A549 (cell line): ENCODE measurements at regions of chr9 and their contacts with region 1.

Region 1: DNA sequence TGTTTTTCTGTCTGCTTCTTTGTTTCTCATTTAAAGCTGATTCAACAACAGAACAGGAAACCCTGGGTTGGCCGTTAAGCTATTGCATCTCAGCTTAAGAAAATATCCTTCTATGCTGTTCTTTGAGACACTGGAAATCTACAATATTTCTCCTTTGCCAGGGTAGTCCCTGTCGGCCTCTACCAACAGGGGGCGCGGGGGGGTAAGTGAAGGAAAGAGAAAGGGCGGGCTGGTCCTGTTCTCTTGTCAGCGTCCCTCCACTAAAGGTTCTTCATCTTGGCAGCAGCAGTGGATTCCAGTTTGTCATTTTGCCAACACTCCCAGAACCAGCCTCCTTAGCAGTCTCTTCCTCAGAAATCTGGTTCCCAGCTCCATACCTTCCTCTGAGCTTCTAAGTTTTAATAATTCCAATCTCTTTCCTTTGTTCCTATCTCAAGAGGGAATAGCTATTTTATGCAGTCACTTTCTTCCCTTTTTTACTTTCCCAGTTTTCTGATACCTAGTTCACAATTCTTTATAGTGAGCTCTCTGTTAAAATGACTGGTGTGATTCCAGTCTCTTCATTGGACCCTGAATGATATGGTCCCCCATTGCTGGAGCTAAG is 222.3 kb downstream of the GLIS3 start:
- DNase-seq: peak; percentile 56 to 76
- ATAC-seq: peak; percentile 87 to 93
- H3K4me3 ChIP-seq: no peak overlapping the region
- H3K27ac ChIP-seq: peak overlapping the region; percentile 19 to 47
- H3K4me1 ChIP-seq: peaks cover 33% of the 10 kb centered on the region
- CTCF ChIP-seq: peak; percentile 63
- EP300 ChIP-seq: no peak
- POLR2A ChIP-seq: no peak
- RAD21 ChIP-seq: peak; percentile 78 to 83

Region 2: DNA sequence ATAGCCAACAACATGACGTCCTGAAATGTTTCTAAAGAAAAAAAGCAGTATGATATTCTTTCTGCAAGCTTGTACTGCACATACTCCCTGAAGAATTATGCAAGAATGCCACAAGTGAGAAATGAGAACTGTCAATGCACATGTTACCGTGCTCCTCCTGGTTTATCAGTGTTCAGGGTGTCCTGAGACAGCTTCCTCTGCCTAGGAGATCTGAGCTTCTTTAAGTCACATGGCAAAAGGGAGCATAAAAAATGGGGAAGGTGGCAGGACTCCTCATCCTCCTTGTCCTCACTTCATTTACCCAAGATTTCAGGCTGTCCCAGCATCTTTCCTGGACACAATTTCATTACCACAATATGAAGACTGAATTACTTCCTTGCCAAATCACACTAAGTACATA is 15.9 kb before region 1 on chr9:
- CTCF ChIA-PET with region 1: interaction called, 11 read pairs
- POLR2A ChIA-PET with region 1: no interaction called
- DNase-seq: no peak
- ATAC-seq: no peak
- H3K4me3 ChIP-seq: no peak overlapping the region
- H3K27ac ChIP-seq: no peak overlapping the region
- H3K4me1 ChIP-seq: peaks cover 22% of the 10 kb centered on the region
- CTCF ChIP-seq: no peak
- EP300 ChIP-seq: no peak
- POLR2A ChIP-seq: no peak
- RAD21 ChIP-seq: no peak

Region 3: DNA sequence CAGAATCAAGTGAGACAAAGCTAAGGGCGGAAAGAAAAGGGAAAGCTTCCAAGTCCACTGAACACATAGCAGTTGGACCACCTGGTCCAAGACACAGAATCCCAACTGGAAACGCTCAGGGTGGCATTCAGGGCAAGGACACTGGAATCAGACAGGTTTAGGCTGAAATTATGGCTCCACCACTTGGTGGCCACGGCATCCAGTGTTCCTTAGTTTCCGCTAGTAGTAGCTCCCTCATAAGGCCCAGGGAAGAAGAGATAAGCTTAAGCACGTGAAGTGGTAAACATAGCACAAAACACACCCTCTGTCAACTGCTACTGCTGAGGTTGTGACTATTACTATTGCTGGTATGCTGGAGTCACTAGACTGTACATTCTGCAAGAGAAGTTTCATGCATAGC is 12.9 kb after region 1 on chr9:
- CTCF ChIA-PET with region 1: interaction called, 11 read pairs
- POLR2A ChIA-PET with region 1: no interaction called
- DNase-seq: peak in 1 of 2 experiments; percentile 31
- ATAC-seq: peak in 1 of 2 experiments; percentile 73; a peak in 3 of 6 replicates
- H3K4me3 ChIP-seq: no peak overlapping the region
- H3K27ac ChIP-seq: no peak overlapping the region
- H3K4me1 ChIP-seq: peaks cover 35% of the 10 kb centered on the region
- CTCF ChIP-seq: no peak
- EP300 ChIP-seq: no peak
- POLR2A ChIP-seq: no peak
- RAD21 ChIP-seq: peak in 1 of 2 experiments; percentile 19; a peak in 1 of 5 replicates

Region 4: GRCh38 chr9:4126180-4126865 is 48.7 kb after region 1 on chr9:
- CTCF ChIA-PET with region 1: interaction called, 11 read pairs
- POLR2A ChIA-PET with region 1: no interaction called
- DNase-seq: peak; percentile 46 to 50
- ATAC-seq: peak; percentile 52 to 76; a peak in 4 of 6 replicates
- H3K4me3 ChIP-seq: no peak overlapping the region
- H3K27ac ChIP-seq: peak overlapping the region; percentile 64 to 76
- H3K4me1 ChIP-seq: peaks cover 58% of the 10 kb centered on the region
- CTCF ChIP-seq: no peak
- EP300 ChIP-seq: no peak
- POLR2A ChIP-seq: no peak
- RAD21 ChIP-seq: no peak

Region 5: DNA sequence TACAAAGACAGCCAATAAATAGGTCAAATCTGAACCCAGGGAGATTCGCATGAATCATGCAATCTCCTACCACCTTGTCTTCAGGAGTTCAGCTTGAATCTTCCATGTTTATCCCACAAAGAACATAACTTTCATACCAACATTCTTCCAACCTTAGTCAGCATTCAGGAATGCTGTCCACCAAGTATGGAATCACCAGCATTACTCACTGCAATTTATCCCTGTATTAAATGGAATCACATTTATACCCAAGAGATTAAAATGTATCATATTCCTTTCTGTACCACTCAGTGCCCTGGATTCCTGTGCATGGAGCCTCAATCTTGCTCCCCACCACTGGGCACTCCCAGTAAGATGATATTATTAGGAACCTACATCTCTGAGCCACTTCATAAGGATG is 59.6 kb after region 1 on chr9:
- CTCF ChIA-PET with region 1: interaction called, 14 read pairs
- POLR2A ChIA-PET with region 1: no interaction called
- DNase-seq: peak; percentile 65 to 91
- ATAC-seq: peak; percentile 87 to 91
- H3K4me3 ChIP-seq: 0 out of 3 replicates have a peak overlapping the region, but pooled peaks have one; percentile 15
- H3K27ac ChIP-seq: peak overlapping the region; percentile 85 to 91
- H3K4me1 ChIP-seq: peaks cover 70% of the 10 kb centered on the region
- CTCF ChIP-seq: no peak
- EP300 ChIP-seq: peak; percentile 70 to 77; a peak in 2 of 5 replicates
- POLR2A ChIP-seq: no peak
- RAD21 ChIP-seq: peak in 1 of 2 experiments; percentile 28; a peak in 2 of 5 replicates

Region 6: DNA sequence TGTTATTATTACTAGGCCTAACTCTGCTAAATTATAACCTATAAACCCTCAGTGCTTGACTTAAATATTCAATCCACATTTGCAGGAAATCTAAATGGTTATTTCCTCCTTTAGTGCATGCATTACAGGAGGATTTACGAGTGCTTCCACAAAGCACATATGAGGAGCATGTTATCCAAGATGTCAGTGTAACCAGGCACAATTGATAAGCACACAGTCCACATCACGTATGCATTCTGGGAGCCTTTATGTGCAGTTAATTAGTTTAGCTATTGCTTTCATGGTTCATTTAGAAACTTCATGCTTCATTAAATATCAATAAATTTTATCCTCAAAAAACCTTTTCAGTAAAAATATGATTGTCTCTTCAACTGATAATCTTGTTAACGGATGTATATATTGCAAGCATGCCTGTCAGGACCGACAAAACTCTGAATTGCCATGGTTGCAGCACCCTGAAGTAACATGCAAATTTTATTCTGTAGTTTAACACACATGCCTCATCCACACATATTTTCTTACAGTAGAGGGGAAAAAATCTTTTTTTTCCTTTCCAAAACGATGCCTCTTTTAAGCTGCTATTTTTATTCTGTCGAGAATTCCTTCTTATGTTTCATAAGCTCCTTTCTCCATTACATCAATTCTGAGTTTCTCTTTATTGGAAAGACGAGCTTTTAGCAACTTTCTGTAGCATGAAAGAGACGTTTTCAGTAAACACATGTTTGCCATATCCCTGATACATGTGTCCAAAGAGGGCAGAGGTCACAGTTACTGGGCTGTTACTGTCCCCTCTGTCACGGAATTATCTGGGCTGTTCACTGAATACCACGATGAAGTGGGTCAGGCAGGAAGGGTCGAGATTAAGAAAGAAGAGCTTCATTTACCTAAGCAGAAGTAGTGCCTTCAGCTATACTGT is 80.2 kb after region 1 on chr9:
- CTCF ChIA-PET with region 1: interaction called, 10 read pairs
- POLR2A ChIA-PET with region 1: no interaction called
- DNase-seq: no peak
- ATAC-seq: no peak
- H3K4me3 ChIP-seq: no peak overlapping the region
- H3K27ac ChIP-seq: peak overlapping the region; percentile 80 to 92
- H3K4me1 ChIP-seq: peaks cover 50% of the 10 kb centered on the region
- CTCF ChIP-seq: no peak
- EP300 ChIP-seq: no peak
- POLR2A ChIP-seq: no peak
- RAD21 ChIP-seq: no peak

Region 7: GRCh38 chr9:4246969-4247368 is 169.4 kb after region 1 on chr9:
- CTCF ChIA-PET with region 1: no interaction called
- POLR2A ChIA-PET with region 1: no interaction called
- DNase-seq: no peak
- ATAC-seq: no peak
- H3K4me3 ChIP-seq: no peak overlapping the region
- H3K27ac ChIP-seq: no peak overlapping the region
- H3K4me1 ChIP-seq: peaks cover 6% of the 10 kb centered on the region; the same call in 1 of the 3 replicates
- CTCF ChIP-seq: no peak
- EP300 ChIP-seq: no peak
- POLR2A ChIP-seq: no peak
- RAD21 ChIP-seq: no peak